Activated CD4-positive, alpha-beta memory T cell treated with anti-CD3 and anti-CD28 coated beads for 36 hours (primary cell): ENCODE measurements at regions of chr16 and their contacts with region 1.

Region 1: GRCh38 chr16:3234543-3235541 is at the start of gene ZNF200:
- DNase-seq: peak; percentile 97
- H3K4me3 Mint-ChIP-seq: peak within 1 kb of the TSS; percentile 83
- H3K27ac Mint-ChIP-seq: peak within 1 kb of the TSS; percentile 92
- H3K4me1 Mint-ChIP-seq: peaks cover 30% of the 10 kb centered on the region
- H3K27me3 Mint-ChIP-seq: no peaks in the 10 kb centered on the region
- total RNA-seq, gene ZNF200: 10.6 to 11.5 TPM

Region 2: GRCh38 chr16:3003582-3004302 is 231.1 kb before region 1 on chr16:
- CTCF ChIA-PET with region 1: no interaction called
- POLR2A ChIA-PET with region 1: no interaction called
- intact Hi-C with region 1: no loop called
- DNase-seq: peak; percentile 99
- H3K4me3 Mint-ChIP-seq: peak overlapping the region; percentile 48
- H3K27ac Mint-ChIP-seq: peak overlapping the region; percentile 58
- H3K4me1 Mint-ChIP-seq: peaks cover 24% of the 10 kb centered on the region
- H3K27me3 Mint-ChIP-seq: peaks cover 5% of the 10 kb centered on the region

Region 3: GRCh38 chr16:3106205-3106928 is 128.5 kb before region 1 on chr16:
- CTCF ChIA-PET with region 1: no interaction called
- POLR2A ChIA-PET with region 1: no interaction called
- intact Hi-C with region 1: no loop called
- DNase-seq: peak; percentile 95
- H3K4me3 Mint-ChIP-seq: peak overlapping the region; percentile 78
- H3K27ac Mint-ChIP-seq: peak overlapping the region; percentile 87
- H3K4me1 Mint-ChIP-seq: peaks cover 25% of the 10 kb centered on the region
- H3K27me3 Mint-ChIP-seq: no peaks in the 10 kb centered on the region

Region 4: DNA sequence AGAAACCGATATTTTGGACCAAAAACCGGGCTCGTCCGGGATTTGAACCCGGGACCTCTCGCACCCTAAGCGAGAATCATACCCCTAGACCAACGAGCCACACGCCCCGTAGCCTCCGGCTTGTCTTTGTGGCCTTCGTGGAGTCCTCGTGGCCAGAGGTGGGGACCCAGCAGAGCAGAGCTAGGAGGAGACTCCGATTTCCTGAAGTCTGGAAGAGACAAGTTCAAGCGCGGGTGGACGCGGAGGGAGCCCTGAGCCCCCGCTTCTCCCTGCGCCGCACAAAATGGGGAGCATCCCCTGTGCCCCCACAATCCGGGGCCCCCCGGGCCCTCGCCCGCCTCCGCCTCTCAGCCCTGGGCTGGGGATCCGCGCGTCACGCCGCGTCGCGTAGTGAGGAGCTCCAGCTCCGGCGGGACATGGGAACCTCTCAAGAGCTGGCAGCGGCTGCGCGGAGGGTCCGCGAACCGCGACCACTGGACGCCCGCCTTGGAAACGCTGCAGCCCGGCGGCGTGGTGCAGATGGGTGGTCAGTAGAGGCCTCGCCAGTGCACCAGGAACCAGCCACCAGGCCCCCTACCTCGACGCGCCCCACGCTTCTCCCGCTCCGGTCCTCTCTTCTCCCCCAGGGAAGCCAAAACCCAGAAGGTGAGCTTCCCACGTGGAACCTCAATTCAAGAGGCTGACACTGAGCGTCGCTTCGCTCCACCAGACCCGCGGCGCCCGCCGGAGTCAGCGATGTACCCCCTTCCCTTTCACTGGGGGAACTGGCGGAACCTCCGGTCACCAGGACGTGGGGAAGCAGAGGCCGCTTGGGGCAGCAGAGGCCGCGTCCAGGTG is 52.0 kb before region 1 on chr16:
- CTCF ChIA-PET with region 1: interaction called, 11 read pairs
- POLR2A ChIA-PET with region 1: no interaction called
- intact Hi-C with region 1: no loop called
- DNase-seq: peak; percentile 77
- H3K4me3 Mint-ChIP-seq: peak overlapping the region; percentile 78
- H3K27ac Mint-ChIP-seq: peak overlapping the region; percentile 84
- H3K4me1 Mint-ChIP-seq: peaks cover 27% of the 10 kb centered on the region
- H3K27me3 Mint-ChIP-seq: peaks cover 70% of the 10 kb centered on the region

Region 5: GRCh38 chr16:3188925-3189825 is 45.7 kb before region 1 on chr16:
- CTCF ChIA-PET with region 1: interaction called, 11 read pairs
- POLR2A ChIA-PET with region 1: interaction called, 4 read pairs
- intact Hi-C with region 1: loop called (anchors 1 kb)
- DNase-seq: peak; percentile 79
- H3K4me3 Mint-ChIP-seq: peak overlapping the region; percentile 69
- H3K27ac Mint-ChIP-seq: peak overlapping the region; percentile 70
- H3K4me1 Mint-ChIP-seq: peaks cover 46% of the 10 kb centered on the region
- H3K27me3 Mint-ChIP-seq: peaks cover 67% of the 10 kb centered on the region

Region 6: DNA sequence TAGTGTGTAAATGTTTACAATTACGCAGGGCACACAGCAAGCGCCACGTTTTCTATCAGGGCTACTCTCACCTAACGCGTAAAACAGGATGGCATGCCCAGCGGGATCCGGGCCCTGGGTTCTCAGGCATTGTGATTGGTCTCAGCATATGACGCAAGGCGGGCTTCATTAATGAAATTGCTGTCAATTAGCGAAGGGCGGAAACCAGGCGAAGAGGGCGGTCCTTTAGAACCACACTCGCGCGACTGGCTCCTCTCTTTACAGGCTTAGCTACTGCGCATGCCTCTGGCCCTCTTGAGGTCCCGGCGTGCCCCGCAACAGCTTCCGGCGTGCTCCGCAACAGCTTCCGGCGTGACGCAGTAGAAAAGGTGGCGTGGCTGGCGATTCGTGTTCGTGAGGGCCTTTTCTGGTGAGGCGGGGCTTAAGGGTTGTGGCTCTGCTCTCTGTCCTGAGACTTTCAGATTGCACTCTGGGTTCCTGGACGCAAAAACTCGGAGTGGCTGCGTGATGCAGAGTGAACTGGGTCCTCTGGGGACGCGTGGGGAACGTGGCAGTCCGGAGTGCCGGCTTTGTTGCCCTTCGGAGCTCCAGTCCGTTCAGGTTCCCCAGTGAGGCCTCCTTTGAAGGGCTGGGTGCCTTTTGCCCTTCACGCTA is 130.1 kb after region 1 on chr16:
- CTCF ChIA-PET with region 1: no interaction called
- POLR2A ChIA-PET with region 1: no interaction called
- intact Hi-C with region 1: loop called (anchors 1 kb)
- DNase-seq: peak; percentile 91
- H3K4me3 Mint-ChIP-seq: peak overlapping the region; percentile 71
- H3K27ac Mint-ChIP-seq: peak overlapping the region; percentile 62
- H3K4me1 Mint-ChIP-seq: peaks cover 5% of the 10 kb centered on the region
- H3K27me3 Mint-ChIP-seq: peaks cover 5% of the 10 kb centered on the region